ENCODE measurements at regions of chr13 and their contacts with region 1.

Region 1: DNA sequence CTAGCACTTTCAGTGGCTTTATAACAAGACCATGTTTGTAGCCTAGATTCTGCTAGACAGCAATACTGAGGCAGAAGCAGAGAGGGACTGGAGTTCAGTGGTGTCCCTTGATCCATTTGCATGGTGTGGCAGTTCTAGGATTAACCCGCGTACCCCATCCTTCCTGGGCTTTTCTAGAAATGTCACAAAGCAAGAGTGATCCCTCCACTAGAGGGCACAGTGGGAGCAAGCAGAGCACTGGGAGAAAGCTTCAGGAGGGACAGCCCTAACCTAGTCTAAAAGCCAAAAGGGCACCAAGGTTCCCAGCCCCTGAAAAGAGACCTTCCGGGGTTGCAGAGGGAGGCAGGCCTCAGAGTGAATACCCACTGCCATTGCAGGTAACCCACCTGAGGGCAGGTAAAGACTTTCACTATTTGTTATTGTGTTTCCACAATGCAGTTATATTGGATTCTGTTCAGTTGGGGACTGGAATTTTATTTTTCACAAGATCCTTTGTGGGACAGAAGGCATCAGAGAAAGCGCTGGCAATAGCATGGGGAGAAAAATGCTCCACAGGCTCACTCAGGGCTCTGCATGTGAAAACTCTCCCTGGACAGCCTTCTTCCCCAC is 170.6 kb downstream of the FLT1 start:
- DNase-seq: peak; percentile 75 to 81
- H3K4me3 ChIP-seq: no peak overlapping the region
- H3K4me3 Mint-ChIP-seq: no peak overlapping the region
- H3K27ac Mint-ChIP-seq: no peak overlapping the region
- H3K4me1 ChIP-seq: peaks cover 8% of the 10 kb centered on the region; the same call in 1 of the 2 replicates
- H3K4me1 Mint-ChIP-seq: peaks cover 14% of the 10 kb centered on the region
- H3K27me3 ChIP-seq: no peaks in the 10 kb centered on the region
- H3K27me3 Mint-ChIP-seq: no peaks in the 10 kb centered on the region
- CTCF ChIP-seq: peak; percentile 90

Region 2: GRCh38 chr13:28347456-28348371 is 23.4 kb after region 1 on chr13:
- CTCF ChIA-PET with region 1: no interaction called
- POLR2A ChIA-PET with region 1: no interaction called
- intact Hi-C with region 1: loop called (anchors 1 kb)
- DNase-seq: no peak
- H3K4me3 ChIP-seq: no peak overlapping the region
- H3K4me3 Mint-ChIP-seq: no peak overlapping the region
- H3K27ac Mint-ChIP-seq: no peak overlapping the region
- H3K4me1 ChIP-seq: peaks cover under 1% of the 10 kb centered on the region
- H3K4me1 Mint-ChIP-seq: peaks cover 4% of the 10 kb centered on the region
- H3K27me3 ChIP-seq: no peaks in the 10 kb centered on the region
- H3K27me3 Mint-ChIP-seq: no peaks in the 10 kb centered on the region
- CTCF ChIP-seq: no peak

Region 3: DNA sequence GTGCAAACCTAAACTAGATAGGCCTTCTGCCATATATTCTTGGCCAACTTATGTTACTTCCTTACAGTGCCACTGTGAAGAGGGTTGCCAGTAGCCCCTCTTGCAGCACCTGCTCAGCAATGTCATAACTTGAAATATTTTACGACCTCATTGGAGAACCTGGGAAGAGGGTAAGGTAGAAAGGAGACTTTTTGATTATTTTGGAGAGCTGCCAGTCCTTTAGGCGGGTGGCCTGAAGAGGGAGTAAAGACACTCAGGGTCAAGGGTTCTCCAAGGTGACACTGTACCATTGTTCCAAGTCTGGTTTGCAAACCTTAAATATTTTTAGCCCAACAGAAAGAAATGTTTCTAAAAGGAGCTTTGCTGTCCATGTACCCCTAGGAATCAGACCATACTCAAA is 52.3 kb after region 1 on chr13:
- CTCF ChIA-PET with region 1: no interaction called
- POLR2A ChIA-PET with region 1: no interaction called
- intact Hi-C with region 1: no loop called
- DNase-seq: no peak
- H3K4me3 ChIP-seq: no peak overlapping the region
- H3K4me3 Mint-ChIP-seq: no peak overlapping the region
- H3K27ac Mint-ChIP-seq: no peak overlapping the region
- H3K4me1 ChIP-seq: no peaks in the 10 kb centered on the region
- H3K4me1 Mint-ChIP-seq: peaks cover 5% of the 10 kb centered on the region
- H3K27me3 ChIP-seq: no peaks in the 10 kb centered on the region
- H3K27me3 Mint-ChIP-seq: peaks cover 2% of the 10 kb centered on the region
- CTCF ChIP-seq: peak; percentile 22 to 26

Region 4: GRCh38 chr13:28475916-28476725 is 151.8 kb after region 1 on chr13:
- CTCF ChIA-PET with region 1: no interaction called
- POLR2A ChIA-PET with region 1: no interaction called
- intact Hi-C with region 1: loop called (anchors 10 kb)
- DNase-seq: no peak
- H3K4me3 ChIP-seq: no peak overlapping the region
- H3K4me3 Mint-ChIP-seq: no peak overlapping the region
- H3K27ac Mint-ChIP-seq: no peak overlapping the region
- H3K4me1 ChIP-seq: peaks cover 17% of the 10 kb centered on the region
- H3K4me1 Mint-ChIP-seq: peaks cover 11% of the 10 kb centered on the region
- H3K27me3 ChIP-seq: no peaks in the 10 kb centered on the region
- H3K27me3 Mint-ChIP-seq: no peaks in the 10 kb centered on the region
- CTCF ChIP-seq: no peak

Region 5: DNA sequence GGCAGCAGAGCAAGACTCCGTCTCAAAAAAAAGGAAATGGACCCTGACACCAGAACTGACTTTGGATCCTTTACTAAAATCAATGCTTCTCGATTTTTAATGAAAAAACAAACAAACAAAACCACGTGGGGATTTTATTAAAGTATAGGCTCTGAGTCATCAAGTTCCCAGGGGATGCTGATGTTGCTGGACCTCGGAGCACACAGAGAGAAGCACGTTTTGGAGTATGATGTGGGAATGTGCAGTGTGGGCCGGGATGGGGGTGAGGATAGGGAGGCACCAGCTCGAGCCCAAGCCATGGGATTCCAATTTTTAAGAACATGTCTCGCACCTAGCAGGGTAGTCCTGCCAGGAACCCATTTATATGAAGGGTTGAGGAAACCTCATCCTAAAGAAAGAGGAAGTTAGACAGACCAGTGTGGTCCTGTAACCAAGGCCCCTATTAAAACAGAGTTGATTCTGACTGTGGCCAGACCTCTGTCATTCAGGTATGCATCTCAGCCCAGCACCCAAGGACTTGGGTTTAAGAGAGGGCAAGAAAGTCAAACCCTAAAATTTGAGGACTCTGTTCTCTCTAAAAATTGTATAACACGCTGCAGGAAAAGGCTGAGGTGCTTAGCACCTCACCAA is 164.2 kb after region 1 on chr13:
- CTCF ChIA-PET with region 1: no interaction called
- POLR2A ChIA-PET with region 1: no interaction called
- intact Hi-C with region 1: no loop called
- DNase-seq: no peak
- H3K4me3 ChIP-seq: no peak overlapping the region
- H3K4me3 Mint-ChIP-seq: no peak overlapping the region
- H3K27ac Mint-ChIP-seq: no peak overlapping the region
- H3K4me1 ChIP-seq: no peaks in the 10 kb centered on the region
- H3K4me1 Mint-ChIP-seq: no peaks in the 10 kb centered on the region
- H3K27me3 ChIP-seq: peaks cover 7% of the 10 kb centered on the region
- H3K27me3 Mint-ChIP-seq: peaks cover 16% of the 10 kb centered on the region
- CTCF ChIP-seq: no peak

Region 6: DNA sequence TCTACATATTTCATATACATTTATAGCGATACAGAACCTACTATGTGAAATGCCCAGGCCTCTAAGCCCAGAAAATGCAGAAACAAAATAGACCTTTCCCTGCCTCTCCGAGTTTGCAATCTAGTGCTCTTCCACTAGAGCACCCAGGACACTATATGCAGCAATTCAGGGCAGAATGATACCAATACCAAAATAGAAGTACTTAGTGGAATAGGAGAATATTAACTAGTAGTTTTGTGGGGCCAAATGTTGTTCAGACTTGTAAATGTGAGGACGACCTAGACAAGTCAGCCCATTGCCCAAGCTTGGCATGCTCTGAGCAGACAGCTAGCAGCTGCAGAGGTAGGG is 206.4 kb after region 1 on chr13:
- CTCF ChIA-PET with region 1: no interaction called
- POLR2A ChIA-PET with region 1: no interaction called
- intact Hi-C with region 1: loop called (anchors 10 kb)
- DNase-seq: no peak
- H3K4me3 ChIP-seq: peak overlapping the region; percentile 28
- H3K4me3 Mint-ChIP-seq: no peak overlapping the region
- H3K27ac Mint-ChIP-seq: no peak overlapping the region
- H3K4me1 ChIP-seq: no peaks in the 10 kb centered on the region
- H3K4me1 Mint-ChIP-seq: no peaks in the 10 kb centered on the region
- H3K27me3 ChIP-seq: no peaks in the 10 kb centered on the region
- H3K27me3 Mint-ChIP-seq: no peaks in the 10 kb centered on the region
- CTCF ChIP-seq: no peak

Region 7: DNA sequence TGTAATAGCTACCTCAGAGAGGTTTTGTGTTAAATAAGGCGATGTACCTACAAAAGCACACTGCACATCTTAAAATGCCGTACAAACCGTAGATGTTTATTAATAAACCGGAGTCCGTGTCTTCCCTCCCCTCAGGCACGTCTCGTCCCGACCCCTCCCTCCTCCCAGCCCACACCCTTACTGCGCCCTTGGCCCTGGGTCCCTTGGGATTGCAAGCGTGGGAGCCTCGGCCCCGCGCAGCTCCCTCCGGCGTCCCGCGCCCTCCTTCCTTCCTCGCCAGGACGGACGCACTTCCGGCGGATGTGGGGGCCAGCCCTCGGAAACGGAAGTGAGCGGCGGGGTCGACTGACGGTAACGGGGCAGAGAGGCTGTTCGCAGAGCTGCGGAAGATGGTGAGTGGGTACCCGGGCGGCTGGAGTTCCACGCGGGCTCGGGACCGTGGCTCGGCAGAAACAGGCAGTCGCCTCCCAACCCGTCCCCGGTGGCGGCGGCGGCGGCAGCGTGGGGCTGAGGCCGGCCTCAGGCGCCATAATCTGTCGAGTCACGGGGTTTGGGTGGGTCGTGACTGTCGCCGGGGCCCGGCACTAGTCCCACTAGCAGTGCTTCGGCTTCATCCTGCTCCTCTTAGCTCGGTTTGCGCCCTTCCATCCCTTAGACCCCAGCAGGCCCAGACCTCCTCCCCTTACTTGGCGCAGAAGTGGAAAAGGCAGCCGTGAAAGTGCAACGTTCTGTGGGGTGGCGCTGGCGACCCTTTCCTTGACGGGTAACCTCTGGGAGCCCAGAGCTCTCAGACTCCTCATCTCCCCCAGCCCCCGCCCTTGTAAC is 334.7 kb after region 1 on chr13 and contains the start of gene POMP:
- CTCF ChIA-PET with region 1: interaction called, 5 read pairs
- POLR2A ChIA-PET with region 1: no interaction called
- intact Hi-C with region 1: loop called (anchors 5 kb)
- DNase-seq: peak; percentile 90
- H3K4me3 ChIP-seq: peak within 1 kb of the TSS; percentile 89
- H3K4me3 Mint-ChIP-seq: peak within 1 kb of the TSS; percentile 94
- H3K27ac Mint-ChIP-seq: peak within 1 kb of the TSS; percentile 85
- H3K4me1 ChIP-seq: peaks cover 14% of the 10 kb centered on the region
- H3K4me1 Mint-ChIP-seq: peaks cover 21% of the 10 kb centered on the region
- H3K27me3 ChIP-seq: no peaks in the 10 kb centered on the region
- H3K27me3 Mint-ChIP-seq: no peaks in the 10 kb centered on the region
- CTCF ChIP-seq: no peak
- total RNA-seq, gene POMP: 116 and 125 TPM in 2 replicates

Region 8: DNA sequence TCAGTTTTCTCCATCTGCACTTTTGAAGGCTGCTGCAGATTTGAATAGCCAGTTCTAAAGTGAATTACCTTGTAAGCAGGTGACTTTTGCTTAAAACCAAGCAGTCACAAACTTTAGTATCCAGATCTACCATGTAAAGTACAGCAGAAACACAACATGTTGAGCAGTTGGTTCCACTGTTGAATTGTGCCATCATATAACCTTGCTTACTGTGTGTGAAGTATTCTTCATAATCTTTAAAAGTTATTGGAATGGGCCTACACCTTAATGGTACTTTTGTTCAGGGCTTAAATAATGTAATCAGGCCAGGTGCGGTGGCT is 472.6 kb after region 1 on chr13:
- CTCF ChIA-PET with region 1: interaction called, 4 read pairs
- POLR2A ChIA-PET with region 1: no interaction called
- intact Hi-C with region 1: loop called (anchors 5 kb)
- DNase-seq: no peak
- H3K4me3 ChIP-seq: no peak overlapping the region
- H3K4me3 Mint-ChIP-seq: peak overlapping the region; percentile 69
- H3K27ac Mint-ChIP-seq: no peak overlapping the region
- H3K4me1 ChIP-seq: no peaks in the 10 kb centered on the region
- H3K4me1 Mint-ChIP-seq: peaks cover 4% of the 10 kb centered on the region
- H3K27me3 ChIP-seq: no peaks in the 10 kb centered on the region
- H3K27me3 Mint-ChIP-seq: peaks cover 20% of the 10 kb centered on the region
- CTCF ChIP-seq: no peak